ENCODE measurements at regions of chr5 and their contacts with region 1.

Region 1: DNA sequence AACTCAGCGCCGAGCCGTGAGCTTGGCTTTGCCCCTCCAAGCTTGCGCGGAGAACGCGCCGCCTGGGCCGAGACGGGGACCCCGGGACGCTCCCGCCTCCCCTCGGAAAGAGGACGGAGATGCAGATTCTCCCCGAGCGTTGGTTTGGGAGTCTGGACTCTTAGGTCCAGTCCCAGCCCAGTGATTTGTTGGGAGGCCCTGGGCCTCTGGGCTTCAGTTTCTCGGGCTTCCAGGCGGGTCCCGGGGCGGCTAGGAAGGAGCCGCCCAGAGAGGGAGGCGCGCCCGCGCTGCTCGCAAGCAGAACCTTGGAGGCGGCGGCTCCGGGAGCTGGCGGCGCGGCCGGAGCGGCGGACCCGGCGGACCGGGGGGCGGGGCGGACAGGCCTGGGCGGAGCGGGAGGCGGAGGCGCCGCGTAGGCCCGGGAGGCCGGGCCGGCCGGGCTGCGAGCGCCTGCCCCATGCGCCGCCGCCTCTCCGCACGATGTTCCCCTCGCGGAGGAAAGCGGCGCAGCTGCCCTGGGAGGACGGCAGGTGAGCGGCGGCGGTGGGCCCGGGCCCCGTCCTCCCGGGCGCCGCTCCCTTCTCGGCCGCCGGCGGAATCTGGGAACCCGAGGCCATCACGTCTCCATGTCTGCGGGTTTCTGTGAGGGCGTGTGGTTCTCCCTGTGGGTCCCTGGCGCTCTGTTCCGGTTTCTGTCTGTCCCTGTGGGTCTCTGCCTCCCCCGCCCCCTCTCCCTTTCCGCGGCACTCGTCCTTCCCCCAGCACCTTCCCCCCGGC is at the start of gene B4GALT7:
- DNase-seq: no peak
- ATAC-seq: peak; percentile 83
- H3K4me3 ChIP-seq: peak within 1 kb of the TSS; percentile 88 to 90
- H3K27ac ChIP-seq: peak within 1 kb of the TSS; percentile 76
- H3K4me1 ChIP-seq: peaks cover 19 to 39% of the 10 kb centered on the region in 2 experiments
- H3K27me3 ChIP-seq: no peaks in the 10 kb centered on the region
- CTCF ChIP-seq: no peak
- POLR2A ChIP-seq: peak; percentile 74
- RAD21 ChIP-seq: no peak
- total RNA-seq, gene B4GALT7: 25.2 TPM

Region 2: GRCh38 chr5:176994460-176995121 is 605.3 kb before region 1 on chr5:
- CTCF ChIA-PET with region 1: no interaction called
- POLR2A ChIA-PET with region 1: no interaction called
- RAD21 ChIA-PET with region 1: no interaction called
- intact Hi-C with region 1: no loop called
- DNase-seq: no peak
- ATAC-seq: no peak
- H3K4me3 ChIP-seq: no peak overlapping the region
- H3K27ac ChIP-seq: no peak overlapping the region
- H3K4me1 ChIP-seq: peaks cover 0 to 8% of the 10 kb centered on the region in 2 experiments; a peak in 2 of 4 replicates
- H3K27me3 ChIP-seq: no peaks in the 10 kb centered on the region
- CTCF ChIP-seq: no peak
- POLR2A ChIP-seq: no peak
- RAD21 ChIP-seq: no peak

Region 3: DNA sequence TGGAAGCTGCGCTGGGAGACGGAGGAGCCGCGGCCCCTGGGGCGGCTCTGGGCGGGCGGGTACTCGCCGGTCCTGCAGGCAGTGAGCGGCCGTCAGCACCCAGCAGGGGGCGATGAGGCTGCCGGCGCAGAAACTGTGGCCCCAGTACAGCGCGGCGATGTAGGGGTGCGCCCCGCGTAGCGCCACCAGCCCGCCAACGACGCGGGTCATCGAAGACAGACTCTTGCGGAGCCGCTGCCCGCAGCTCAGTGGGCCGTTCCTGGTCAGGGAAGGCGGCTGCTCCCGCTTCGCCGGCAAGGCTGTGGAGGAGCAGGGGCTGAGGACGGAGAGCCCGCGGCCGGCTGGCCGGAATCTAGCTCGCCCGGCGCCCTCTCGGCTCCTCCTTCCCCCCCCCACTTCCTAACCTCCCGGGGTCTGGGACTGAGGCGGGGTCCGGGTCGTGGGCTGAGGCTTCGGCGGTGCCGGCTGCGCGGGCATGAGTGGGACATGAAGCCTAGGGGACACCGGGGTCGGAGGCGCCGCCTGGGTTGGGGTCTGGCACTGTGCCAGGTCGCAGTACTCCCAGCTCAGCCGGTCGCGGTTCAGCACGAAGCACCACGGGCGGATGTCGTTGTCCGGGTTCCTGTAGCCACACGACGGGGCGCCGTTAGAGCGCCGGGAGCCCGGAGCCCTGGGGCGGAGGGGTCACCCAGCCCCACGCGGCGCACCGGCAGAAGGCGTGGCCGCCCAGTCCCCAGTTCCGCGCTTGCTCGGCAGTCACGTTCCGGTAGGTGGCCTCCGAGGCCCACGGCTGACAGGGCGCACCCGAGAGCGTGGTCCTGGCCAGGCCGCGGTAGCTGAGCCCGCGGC is 195.9 kb before region 1 on chr5:
- CTCF ChIA-PET with region 1: no interaction called
- POLR2A ChIA-PET with region 1: no interaction called
- RAD21 ChIA-PET with region 1: no interaction called
- intact Hi-C with region 1: loop called (anchors 2 kb)
- DNase-seq: peak; percentile 56
- ATAC-seq: peak; percentile 72
- H3K4me3 ChIP-seq: peak overlapping the region; percentile 69 to 82
- H3K27ac ChIP-seq: peak overlapping the region; percentile 99
- H3K4me1 ChIP-seq: peaks cover 15 to 37% of the 10 kb centered on the region in 2 experiments
- H3K27me3 ChIP-seq: no peaks in the 10 kb centered on the region
- CTCF ChIP-seq: peak in 2 of 3 experiments; percentile 55 to 69; a peak in 4 of 6 replicates
- POLR2A ChIP-seq: no peak
- RAD21 ChIP-seq: no peak

Region 4: GRCh38 chr5:177516604-177517568 is 83.0 kb before region 1 on chr5 and contains the start of gene DDX41:
- CTCF ChIA-PET with region 1: no interaction called
- POLR2A ChIA-PET with region 1: no interaction called
- RAD21 ChIA-PET with region 1: no interaction called
- intact Hi-C with region 1: loop called (anchors 2 kb)
- DNase-seq: peak; percentile 99
- ATAC-seq: peak; percentile 91
- H3K4me3 ChIP-seq: peak within 1 kb of the TSS; percentile 96 to 99
- H3K27ac ChIP-seq: peak within 1 kb of the TSS; percentile 58
- H3K4me1 ChIP-seq: peaks cover 11 to 24% of the 10 kb centered on the region in 2 experiments; a peak in 3 of 4 replicates
- H3K27me3 ChIP-seq: no peaks in the 10 kb centered on the region
- CTCF ChIP-seq: no peak
- POLR2A ChIP-seq: peak; percentile 48
- RAD21 ChIP-seq: no peak
- total RNA-seq, gene DDX41: 141 TPM

Region 5: GRCh38 chr5:177557041-177557647 is 42.8 kb before region 1 on chr5:
- CTCF ChIA-PET with region 1: no interaction called
- POLR2A ChIA-PET with region 1: no interaction called
- RAD21 ChIA-PET with region 1: no interaction called
- intact Hi-C with region 1: loop called (anchors 2 kb)
- DNase-seq: no peak
- ATAC-seq: no peak
- H3K4me3 ChIP-seq: no peak overlapping the region
- H3K27ac ChIP-seq: no peak overlapping the region
- H3K4me1 ChIP-seq: peaks cover 11 to 22% of the 10 kb centered on the region in 2 experiments; a peak in 3 of 4 replicates
- H3K27me3 ChIP-seq: no peaks in the 10 kb centered on the region
- CTCF ChIP-seq: no peak
- POLR2A ChIP-seq: no peak
- RAD21 ChIP-seq: no peak

Region 6: DNA sequence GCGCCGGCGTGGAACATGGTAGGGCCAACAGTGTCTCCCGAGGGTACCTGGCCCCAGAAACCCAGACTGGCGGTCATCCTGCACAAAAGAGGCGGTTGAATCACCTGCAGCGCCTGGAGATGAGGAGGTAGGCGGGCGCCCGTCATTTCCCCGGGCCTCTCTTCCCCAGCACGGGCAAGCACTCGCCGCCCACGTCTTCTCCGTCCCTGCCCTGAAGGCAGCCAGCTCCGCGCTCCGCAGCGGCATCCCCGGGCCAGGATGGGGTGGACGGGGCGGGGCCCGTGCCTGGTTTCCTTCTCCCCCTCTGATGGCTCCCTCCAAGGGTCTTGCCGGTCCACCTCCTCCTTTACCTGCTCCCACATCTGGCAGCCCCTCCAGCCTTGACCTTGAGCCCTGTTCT is 486.4 kb after region 1 on chr5:
- CTCF ChIA-PET with region 1: no interaction called
- POLR2A ChIA-PET with region 1: no interaction called
- RAD21 ChIA-PET with region 1: no interaction called
- intact Hi-C with region 1: no loop called
- DNase-seq: no peak
- ATAC-seq: no peak
- H3K4me3 ChIP-seq: no peak overlapping the region
- H3K27ac ChIP-seq: no peak overlapping the region
- H3K4me1 ChIP-seq: no peaks in the 10 kb centered on the region
- H3K27me3 ChIP-seq: no peaks in the 10 kb centered on the region
- CTCF ChIP-seq: no peak
- POLR2A ChIP-seq: no peak
- RAD21 ChIP-seq: no peak

Region 7: DNA sequence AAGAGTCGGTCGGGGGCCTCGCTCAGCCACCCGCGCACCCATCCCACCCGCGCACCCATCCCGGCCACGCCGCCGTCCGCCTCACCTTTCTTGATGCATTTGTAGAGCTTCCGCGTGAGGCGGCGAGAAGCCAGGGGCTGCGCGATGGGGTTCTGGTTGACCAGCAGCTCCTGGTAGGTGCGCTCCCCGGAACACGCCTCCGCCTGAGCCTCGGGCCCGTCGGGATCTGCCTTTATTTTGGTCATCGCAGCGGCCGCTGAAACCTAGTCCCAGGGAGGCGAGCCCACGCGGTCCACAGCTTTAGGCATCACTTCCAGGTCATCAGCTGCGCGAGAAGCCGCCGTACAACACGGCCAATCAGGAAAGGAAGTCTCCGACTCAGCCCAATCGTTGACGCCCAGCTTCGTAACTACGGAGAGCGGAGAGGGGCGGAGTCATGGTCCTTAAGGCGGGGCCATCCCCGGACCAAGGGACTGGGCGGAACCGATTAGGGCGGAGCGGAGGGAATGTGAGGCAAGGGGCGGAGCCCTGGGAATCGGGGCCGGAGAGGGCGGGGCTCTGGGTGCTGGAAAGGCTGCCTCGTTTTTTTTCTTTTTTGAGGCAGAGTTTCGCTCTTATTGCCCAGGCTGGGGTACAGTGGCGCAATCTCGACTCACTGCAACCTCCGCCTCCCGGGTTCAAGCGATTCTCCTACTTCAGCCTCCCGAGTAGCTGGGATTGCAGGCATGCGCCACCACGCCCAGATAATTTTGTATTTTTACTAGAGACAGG is 553.8 kb after region 1 on chr5 and contains the start of gene NHP2:
- CTCF ChIA-PET with region 1: no interaction called
- POLR2A ChIA-PET with region 1: no interaction called
- RAD21 ChIA-PET with region 1: no interaction called
- intact Hi-C with region 1: loop called (anchors 5 kb)
- DNase-seq: peak; percentile 98
- ATAC-seq: peak; percentile 95
- H3K4me3 ChIP-seq: peak within 1 kb of the TSS; percentile 78 to 86
- H3K27ac ChIP-seq: peak within 1 kb of the TSS; percentile 51
- H3K4me1 ChIP-seq: peaks cover 14 to 21% of the 10 kb centered on the region in 2 experiments; a peak in 3 of 4 replicates
- H3K27me3 ChIP-seq: no peaks in the 10 kb centered on the region
- CTCF ChIP-seq: no peak
- POLR2A ChIP-seq: peak; percentile 26
- RAD21 ChIP-seq: no peak
- total RNA-seq, gene NHP2: 260 TPM